CD8-positive, alpha-beta T cell (primary cell): ENCODE measurements at regions of chr19 and their contacts with region 1.

Region 1: GRCh38 chr19:54189735-54190502 is 539 bp upstream of the MBOAT7 start:
- DNase-seq: peak; percentile 99 to 100 (median 100)
- ATAC-seq: peak; percentile 62
- H3K4me3 ChIP-seq: peak overlapping the region; percentile 69 to 76
- H3K4me3 Mint-ChIP-seq: peak overlapping the region; percentile 91
- H3K27ac ChIP-seq: peak overlapping the region; percentile 100
- H3K27ac Mint-ChIP-seq: peak overlapping the region; percentile 100
- H3K4me1 ChIP-seq: peaks cover 22% of the 10 kb centered on the region
- H3K4me1 Mint-ChIP-seq: peaks cover 38% of the 10 kb centered on the region
- H3K27me3 ChIP-seq: no peaks in the 10 kb centered on the region
- H3K27me3 Mint-ChIP-seq: no peaks in the 10 kb centered on the region
- CTCF ChIP-seq: no peak

Region 2: GRCh38 chr19:54115109-54116063 is 74.5 kb before region 1 on chr19 and contains the starts of genes PRPF31 and TFPT:
- CTCF ChIA-PET with region 1: no interaction called
- POLR2A ChIA-PET with region 1: interaction called, 27 read pairs
- intact Hi-C with region 1: loop called (anchors 1 kb)
- DNase-seq: peak; percentile 90 to 99 (median 97)
- ATAC-seq: peak; percentile 87
- H3K4me3 ChIP-seq: peak within 1 kb of the TSS; percentile 77 to 81
- H3K4me3 Mint-ChIP-seq: peak within 1 kb of the TSS; percentile 91
- H3K27ac ChIP-seq: peak within 1 kb of the TSS; percentile 64 to 89
- H3K27ac Mint-ChIP-seq: peak within 1 kb of the TSS; percentile 90
- H3K4me1 ChIP-seq: peaks cover 22% of the 10 kb centered on the region
- H3K4me1 Mint-ChIP-seq: peaks cover 40% of the 10 kb centered on the region
- H3K27me3 ChIP-seq: no peaks in the 10 kb centered on the region
- H3K27me3 Mint-ChIP-seq: no peaks in the 10 kb centered on the region
- CTCF ChIP-seq: no peak
- total RNA-seq, gene PRPF31: 60.0 to 66.8 TPM
- total RNA-seq, gene TFPT: 7.8 to 8.2 TPM

Region 3: DNA sequence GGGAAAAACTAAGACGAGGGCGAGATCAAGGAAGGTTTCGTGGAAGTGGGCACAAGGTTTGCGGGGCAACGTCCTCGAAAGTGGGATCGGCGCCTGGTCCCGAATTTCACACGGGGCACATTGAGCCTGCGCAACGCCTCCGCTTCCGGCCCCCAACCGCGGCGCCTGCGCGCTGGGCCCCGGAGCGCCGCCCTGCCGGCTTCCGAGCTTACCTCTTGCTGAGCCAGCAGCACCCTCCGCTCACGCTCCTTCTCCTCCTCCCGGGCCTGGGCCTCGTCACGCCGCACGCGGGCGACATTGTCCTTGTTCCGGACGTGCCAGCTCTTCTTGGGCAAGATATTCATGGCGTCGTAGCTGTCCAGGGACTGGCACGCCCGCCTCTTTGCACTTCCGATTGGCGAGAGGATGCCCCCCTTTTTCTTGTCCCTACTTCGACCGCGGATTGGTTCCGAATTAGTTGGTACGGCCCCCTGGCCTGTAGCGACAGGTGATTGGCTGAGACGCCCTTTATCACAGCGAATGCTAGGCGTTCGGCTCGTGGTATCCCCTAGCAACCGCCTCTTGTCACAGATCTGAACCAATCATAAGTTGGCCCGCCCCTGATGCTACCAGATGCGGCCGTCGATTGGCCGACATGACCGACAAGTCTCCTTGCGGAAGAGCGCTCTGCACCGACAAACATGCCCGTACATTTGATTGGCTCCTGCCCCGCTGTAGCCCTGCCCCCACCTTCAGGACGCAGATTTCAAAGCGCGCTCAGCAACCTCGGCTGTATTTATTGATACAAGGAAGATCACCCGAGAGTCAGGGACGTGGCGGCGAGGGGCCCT is 30.4 kb before region 1 on chr19 and contains the start of gene LENG1:
- CTCF ChIA-PET with region 1: interaction called, 5 read pairs
- POLR2A ChIA-PET with region 1: interaction called, 37 read pairs
- intact Hi-C with region 1: loop called (anchors 1 kb)
- DNase-seq: peak; percentile 96 to 100 (median 98)
- ATAC-seq: peak; percentile 84
- H3K4me3 ChIP-seq: peak within 1 kb of the TSS; percentile 71 to 75
- H3K4me3 Mint-ChIP-seq: peak within 1 kb of the TSS; percentile 99
- H3K27ac ChIP-seq: peak within 1 kb of the TSS; percentile 79 to 87
- H3K27ac Mint-ChIP-seq: peak within 1 kb of the TSS; percentile 99
- H3K4me1 ChIP-seq: peaks cover 67% of the 10 kb centered on the region
- H3K4me1 Mint-ChIP-seq: peaks cover 59% of the 10 kb centered on the region
- H3K27me3 ChIP-seq: peaks cover 0 to 2% of the 10 kb centered on the region in 2 experiments
- H3K27me3 Mint-ChIP-seq: peaks cover 2% of the 10 kb centered on the region
- CTCF ChIP-seq: no peak
- total RNA-seq, gene LENG1: 15.5 to 15.8 TPM

Region 4: DNA sequence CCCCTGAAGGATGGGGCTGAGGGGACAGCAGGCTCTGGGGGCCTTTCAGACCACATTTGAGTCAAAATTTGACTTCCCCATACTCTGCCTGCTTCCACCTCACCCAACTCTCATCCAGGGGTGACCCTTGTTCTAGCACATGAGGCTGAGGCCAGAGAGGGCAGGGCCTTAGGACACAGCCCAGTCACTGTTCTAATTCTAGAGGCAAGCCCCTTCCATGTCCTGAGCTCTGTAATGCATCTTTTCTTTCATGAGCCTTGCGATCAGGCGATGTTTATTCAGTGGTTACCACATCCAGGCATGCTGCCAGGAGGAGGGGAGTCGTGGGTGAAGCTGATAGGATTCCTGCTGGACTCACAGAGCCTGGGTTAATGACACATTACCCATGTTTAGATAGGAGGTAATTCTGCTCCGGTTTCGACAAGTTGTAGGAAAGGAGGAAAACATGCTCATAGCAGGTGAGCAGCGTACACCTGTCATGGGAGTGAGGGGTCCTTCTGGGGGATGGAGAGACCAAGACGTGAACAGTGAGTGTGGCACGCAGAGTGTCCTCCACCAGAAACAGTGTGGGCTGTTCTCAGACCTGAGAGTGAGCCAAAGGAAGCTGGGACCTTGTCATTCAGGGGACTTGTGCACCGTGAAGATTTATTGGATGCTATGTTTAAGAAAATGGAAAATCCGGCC is 20.0 kb after region 1 on chr19:
- CTCF ChIA-PET with region 1: interaction called, 4 read pairs
- POLR2A ChIA-PET with region 1: interaction called, 11 read pairs
- intact Hi-C with region 1: no loop called
- DNase-seq: peak in 4 of 9 experiments; percentile 41 to 71 (median 52)
- ATAC-seq: no peak
- H3K4me3 ChIP-seq: no peak overlapping the region
- H3K4me3 Mint-ChIP-seq: peak overlapping the region; percentile 46
- H3K27ac ChIP-seq: peak overlapping the region in 1 of 2 experiments; percentile 68
- H3K27ac Mint-ChIP-seq: peak overlapping the region; percentile 92
- H3K4me1 ChIP-seq: peaks cover 60% of the 10 kb centered on the region
- H3K4me1 Mint-ChIP-seq: peaks cover 58% of the 10 kb centered on the region
- H3K27me3 ChIP-seq: no peaks in the 10 kb centered on the region
- H3K27me3 Mint-ChIP-seq: no peaks in the 10 kb centered on the region
- CTCF ChIP-seq: no peak

Region 5: GRCh38 chr19:54448774-54449700 is 259.1 kb after region 1 on chr19 and contains the start of gene LENG8:
- CTCF ChIA-PET with region 1: no interaction called
- POLR2A ChIA-PET with region 1: interaction called, 8 read pairs
- intact Hi-C with region 1: loop called (anchors 1 kb)
- DNase-seq: peak; percentile 94 to 100 (median 97)
- ATAC-seq: peak; percentile 89
- H3K4me3 ChIP-seq: peak within 1 kb of the TSS; percentile 66 to 67
- H3K4me3 Mint-ChIP-seq: peak within 1 kb of the TSS; percentile 99
- H3K27ac ChIP-seq: peak within 1 kb of the TSS; percentile 97 to 98
- H3K27ac Mint-ChIP-seq: peak within 1 kb of the TSS; percentile 99
- H3K4me1 ChIP-seq: peaks cover 39% of the 10 kb centered on the region
- H3K4me1 Mint-ChIP-seq: peaks cover 52% of the 10 kb centered on the region
- H3K27me3 ChIP-seq: no peaks in the 10 kb centered on the region
- H3K27me3 Mint-ChIP-seq: no peaks in the 10 kb centered on the region
- CTCF ChIP-seq: no peak
- total RNA-seq, gene LENG8: 514 to 558 TPM